Ovary (tissue), 10 donors: ENCODE measurements at regions of chr19 and their contacts with region 1.

Region 1: GRCh38 chr19:57002710-57003109 is 117.1 kb upstream of the USP29 start:
- DNase-seq: peak in 2 of 5 donors; percentile 51 to 53
- H3K4me3 ChIP-seq: no peak overlapping the region
- H3K27ac ChIP-seq: peak overlapping the region in 1 of 2 donors; percentile 82
- H3K4me1 ChIP-seq: peaks cover 16% of the 10 kb centered on the region
- H3K27me3 ChIP-seq: no peaks in the 10 kb centered on the region
- CTCF ChIP-seq: no peak
- EP300 ChIP-seq: no peak
- POLR2A ChIP-seq: no peak

Region 2: DNA sequence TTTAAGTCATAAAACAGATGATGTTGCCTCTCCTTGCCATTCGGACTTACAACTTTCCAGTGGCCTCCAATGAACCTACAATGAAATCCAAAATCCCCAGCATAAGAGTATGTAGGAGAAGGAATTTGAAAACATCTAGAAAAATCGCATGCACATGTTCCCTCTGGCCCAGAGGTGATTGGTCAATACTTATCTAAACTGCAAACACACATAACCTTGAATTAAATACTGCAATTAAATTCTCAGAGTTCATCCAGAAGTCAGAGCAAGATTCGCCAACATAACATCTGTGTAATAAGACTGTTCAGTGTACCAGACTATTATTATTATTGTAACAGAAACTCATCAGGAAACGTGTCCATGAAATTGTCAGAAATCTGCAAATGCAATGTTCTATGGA is 34.8 kb after region 1 on chr19:
- intact Hi-C with region 1: loop called in 1 of 4 experiments (anchors 5 kb)
- DNase-seq: peak in 1 of 5 donors; percentile 27
- H3K4me3 ChIP-seq: no peak overlapping the region
- H3K27ac ChIP-seq: peak overlapping the region; percentile 30 to 87
- H3K4me1 ChIP-seq: peaks cover 18% of the 10 kb centered on the region
- H3K27me3 ChIP-seq: no peaks in the 10 kb centered on the region
- CTCF ChIP-seq: no peak
- EP300 ChIP-seq: no peak
- POLR2A ChIP-seq: no peak